H1 (cell line): ENCODE measurements at regions of chr1 and their contacts with region 1.

Region 1: GRCh38 chr1:119475866-119476439 is 31.1 kb upstream of the HSD3B1 start:
- DNase-seq: peak; percentile 46 to 85
- H3K4me3 ChIP-seq: no peak overlapping the region
- H3K27ac ChIP-seq: no peak overlapping the region
- H3K4me1 ChIP-seq: peaks cover 0 to 3% (median 3%) of the 10 kb centered on the region in 4 experiments; a peak in 4 of 7 replicates
- H3K27me3 ChIP-seq: peaks cover 0 to 2% (median 0%) of the 10 kb centered on the region in 4 experiments; a peak in 1 of 7 replicates
- CTCF ChIP-seq: peak; percentile 86 to 96 (median 93)
- EP300 ChIP-seq: no peak
- POLR2A ChIP-seq: no peak
- RAD21 ChIP-seq: peak; percentile 89 to 92

Region 2: GRCh38 chr1:119453021-119453420 is 22.9 kb before region 1 on chr1:
- CTCF ChIA-PET with region 1: interaction called, 20 read pairs
- POLR2A ChIA-PET with region 1: no interaction called
- DNase-seq: no peak
- H3K4me3 ChIP-seq: no peak overlapping the region
- H3K27ac ChIP-seq: no peak overlapping the region
- H3K4me1 ChIP-seq: peaks cover 0 to 2% (median 0%) of the 10 kb centered on the region in 4 experiments; a peak in 2 of 7 replicates
- H3K27me3 ChIP-seq: no peaks in the 10 kb centered on the region
- CTCF ChIP-seq: no peak
- EP300 ChIP-seq: no peak
- POLR2A ChIP-seq: no peak
- RAD21 ChIP-seq: no peak

Region 3: DNA sequence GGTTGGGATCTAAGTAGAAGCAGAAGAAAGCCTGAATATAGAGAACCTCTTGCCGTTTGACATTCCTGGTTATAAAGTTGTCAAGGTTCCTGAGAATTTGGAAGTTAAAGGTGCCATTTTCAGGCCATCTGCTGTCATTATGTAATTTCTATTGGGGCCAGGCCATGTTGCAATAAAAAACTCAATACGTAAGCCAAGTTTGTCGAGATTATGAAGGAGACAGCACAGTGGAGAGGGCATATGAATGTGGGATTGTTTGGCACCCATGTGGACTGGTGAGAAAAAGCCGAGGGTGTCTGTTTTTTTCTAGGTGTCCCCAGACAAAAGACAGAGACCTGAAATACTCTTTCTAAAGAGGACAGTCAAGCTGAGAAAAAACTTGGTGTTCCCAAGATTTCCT is 12.3 kb after region 1 on chr1:
- CTCF ChIA-PET with region 1: interaction called, 14 read pairs
- POLR2A ChIA-PET with region 1: no interaction called
- DNase-seq: no peak
- H3K4me3 ChIP-seq: no peak overlapping the region
- H3K27ac ChIP-seq: no peak overlapping the region
- H3K4me1 ChIP-seq: peaks cover 0 to 6% (median 2%) of the 10 kb centered on the region in 4 experiments; a peak in 3 of 7 replicates
- H3K27me3 ChIP-seq: no peaks in the 10 kb centered on the region
- CTCF ChIP-seq: no peak
- EP300 ChIP-seq: no peak
- POLR2A ChIP-seq: no peak
- RAD21 ChIP-seq: no peak